ENCODE measurements at regions of chr1 and their contacts with region 1.

Region 1: DNA sequence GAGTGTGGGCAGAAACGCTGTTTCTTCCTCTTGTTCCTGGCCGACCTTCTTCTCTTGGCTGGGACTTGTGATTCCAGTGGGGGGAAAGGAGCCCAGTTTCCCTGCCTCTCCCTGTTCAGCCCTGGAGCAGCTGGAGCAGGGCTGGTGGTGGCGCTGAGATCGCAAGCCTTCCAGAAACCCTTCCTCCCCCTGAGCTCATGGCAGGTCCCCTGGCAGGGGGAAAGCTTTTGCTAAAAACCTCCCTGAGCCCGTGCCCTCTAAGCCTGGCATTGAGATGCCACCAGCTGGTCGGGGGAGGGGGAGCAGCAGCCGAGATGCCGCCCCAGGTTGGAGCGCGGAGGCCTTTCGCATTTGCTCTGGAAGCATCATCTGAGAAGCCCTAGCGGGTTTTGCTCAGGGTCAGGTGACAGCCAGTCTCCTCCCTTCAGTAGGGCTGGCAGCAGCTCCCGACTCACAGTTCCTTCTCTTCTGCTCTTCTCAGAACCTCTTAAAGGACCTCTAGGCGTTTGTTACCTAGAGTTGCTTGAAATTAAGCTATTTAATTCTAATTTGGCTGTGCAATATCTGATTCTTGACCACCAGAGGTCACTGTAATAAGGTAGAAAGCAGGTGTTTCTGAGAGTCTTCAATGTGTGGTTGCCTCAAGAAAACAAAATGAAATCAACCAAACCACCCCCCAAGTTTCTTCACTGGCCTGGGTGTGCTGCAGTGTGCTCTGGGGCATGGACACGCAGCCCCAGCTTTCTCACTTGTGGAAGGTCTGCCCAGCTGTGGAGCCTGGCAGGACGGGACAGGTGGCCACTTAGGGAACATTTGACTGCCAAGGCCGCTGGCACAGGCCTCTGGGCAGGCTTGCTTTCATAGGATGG is 257.3 kb downstream of the CAMTA1 start:
- DNase-seq: peak; percentile 31
- H3K4me3 ChIP-seq: no peak overlapping the region
- H3K27ac ChIP-seq: no peak overlapping the region
- H3K4me1 ChIP-seq: no peaks in the 10 kb centered on the region
- H3K27me3 ChIP-seq: no peaks in the 10 kb centered on the region
- CTCF ChIP-seq: peak; percentile 35 to 40
- POLR2A ChIP-seq: no peak

Region 2: GRCh38 chr1:7026169-7026568 is 16.4 kb before region 1 on chr1:
- CTCF ChIA-PET with region 1: interaction called, 11 read pairs
- POLR2A ChIA-PET with region 1: no interaction called
- dilution Hi-C with region 1: no loop called
- intact Hi-C with region 1: no loop called
- DNase-seq: no peak
- H3K4me3 ChIP-seq: no peak overlapping the region
- H3K27ac ChIP-seq: no peak overlapping the region
- H3K4me1 ChIP-seq: no peaks in the 10 kb centered on the region
- H3K27me3 ChIP-seq: no peaks in the 10 kb centered on the region
- CTCF ChIP-seq: no peak
- POLR2A ChIP-seq: no peak

Region 3: DNA sequence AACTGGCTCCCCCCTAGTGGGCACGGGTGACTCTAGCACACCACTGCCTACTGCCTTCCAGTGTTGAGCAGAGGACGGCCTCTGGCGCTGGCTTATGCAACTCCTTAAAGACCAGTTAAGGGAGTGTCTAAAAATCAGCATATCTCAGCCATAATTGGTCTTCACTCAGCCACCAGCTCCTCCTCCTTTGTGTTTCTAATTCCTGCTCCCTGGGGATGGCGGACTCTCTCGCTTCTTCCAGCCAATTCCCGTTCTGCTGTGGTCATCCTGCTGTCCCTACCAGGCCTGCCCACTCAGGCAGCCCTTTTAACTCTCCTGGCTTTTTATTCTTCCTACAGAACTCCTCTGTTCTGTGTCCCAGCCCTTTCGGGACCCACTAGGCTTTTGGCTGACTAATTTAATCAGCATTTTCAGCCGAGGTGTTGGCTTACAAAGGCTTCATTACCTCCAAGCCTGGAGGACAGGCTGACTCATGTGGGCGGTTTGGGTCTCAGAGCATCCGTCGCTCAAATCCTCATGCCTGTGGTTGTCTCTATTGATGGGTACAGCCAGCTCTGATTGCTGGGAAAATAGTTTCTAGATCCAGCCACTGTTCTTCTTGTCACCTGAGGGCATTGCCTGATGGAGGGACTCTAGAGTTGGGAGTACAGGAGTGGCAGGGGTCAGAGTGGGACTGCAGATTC is 75.2 kb after region 1 on chr1:
- CTCF ChIA-PET with region 1: interaction called, 3 read pairs
- POLR2A ChIA-PET with region 1: no interaction called
- dilution Hi-C with region 1: no loop called
- intact Hi-C with region 1: loop called (anchors 10 kb)
- DNase-seq: no peak
- H3K4me3 ChIP-seq: no peak overlapping the region
- H3K27ac ChIP-seq: no peak overlapping the region
- H3K4me1 ChIP-seq: no peaks in the 10 kb centered on the region
- H3K27me3 ChIP-seq: no peaks in the 10 kb centered on the region
- CTCF ChIP-seq: no peak
- POLR2A ChIP-seq: no peak

Region 4: GRCh38 chr1:7207875-7208646 is 165.5 kb after region 1 on chr1:
- CTCF ChIA-PET with region 1: interaction called, 40 read pairs
- POLR2A ChIA-PET with region 1: no interaction called
- dilution Hi-C with region 1: no loop called
- intact Hi-C with region 1: no loop called
- DNase-seq: peak; percentile 59
- H3K4me3 ChIP-seq: no peak overlapping the region
- H3K27ac ChIP-seq: no peak overlapping the region
- H3K4me1 ChIP-seq: no peaks in the 10 kb centered on the region
- H3K27me3 ChIP-seq: no peaks in the 10 kb centered on the region
- CTCF ChIP-seq: peak; percentile 62 to 72
- POLR2A ChIP-seq: no peak

Region 5: DNA sequence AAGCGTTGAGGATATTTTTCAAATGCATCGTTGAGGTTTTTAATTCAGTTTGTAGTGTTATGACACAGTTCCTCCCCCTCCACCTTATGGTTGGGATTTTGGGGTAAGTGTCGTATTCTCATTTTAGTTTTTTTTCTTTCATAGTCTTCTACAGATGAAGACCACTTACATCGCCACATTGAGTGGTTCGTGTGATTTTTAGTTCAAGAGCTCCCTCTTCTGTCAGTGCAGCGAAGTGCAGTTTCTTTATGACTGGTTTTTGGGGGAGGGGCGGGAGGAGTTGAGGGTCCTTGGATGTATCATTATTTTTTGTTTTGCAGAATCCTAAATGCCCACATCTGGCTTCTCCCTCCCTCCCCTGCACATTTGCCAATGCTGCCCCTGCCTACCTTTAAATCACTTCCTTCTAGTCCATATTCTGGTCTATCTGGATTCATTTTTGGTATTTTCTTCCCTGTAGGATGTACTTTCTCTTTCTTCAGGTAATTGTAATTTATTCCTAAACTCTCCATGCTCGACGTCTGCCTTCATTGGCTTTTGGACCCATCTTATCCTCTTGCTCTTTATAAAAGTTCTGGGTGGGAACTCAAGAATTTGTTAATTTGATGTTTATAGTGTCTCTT is 175.8 kb after region 1 on chr1:
- CTCF ChIA-PET with region 1: interaction called, 18 read pairs
- POLR2A ChIA-PET with region 1: no interaction called
- dilution Hi-C with region 1: no loop called
- intact Hi-C with region 1: loop called (anchors 2 kb)
- DNase-seq: peak; percentile 62
- H3K4me3 ChIP-seq: no peak overlapping the region
- H3K27ac ChIP-seq: no peak overlapping the region
- H3K4me1 ChIP-seq: no peaks in the 10 kb centered on the region
- H3K27me3 ChIP-seq: no peaks in the 10 kb centered on the region
- CTCF ChIP-seq: peak; percentile 66 to 74
- POLR2A ChIP-seq: no peak

Region 6: GRCh38 chr1:7326347-7326746 is 283.8 kb after region 1 on chr1:
- CTCF ChIA-PET with region 1: no interaction called
- POLR2A ChIA-PET with region 1: no interaction called
- dilution Hi-C with region 1: no loop called
- intact Hi-C with region 1: no loop called
- DNase-seq: no peak
- H3K4me3 ChIP-seq: no peak overlapping the region
- H3K27ac ChIP-seq: no peak overlapping the region
- H3K4me1 ChIP-seq: no peaks in the 10 kb centered on the region
- H3K27me3 ChIP-seq: no peaks in the 10 kb centered on the region
- CTCF ChIP-seq: no peak
- POLR2A ChIP-seq: no peak

Region 7: GRCh38 chr1:7576946-7577641 is 534.5 kb after region 1 on chr1:
- CTCF ChIA-PET with region 1: interaction called, 11 read pairs
- POLR2A ChIA-PET with region 1: no interaction called
- dilution Hi-C with region 1: no loop called
- intact Hi-C with region 1: no loop called
- DNase-seq: peak; percentile 43
- H3K4me3 ChIP-seq: no peak overlapping the region
- H3K27ac ChIP-seq: no peak overlapping the region
- H3K4me1 ChIP-seq: no peaks in the 10 kb centered on the region
- H3K27me3 ChIP-seq: no peaks in the 10 kb centered on the region
- CTCF ChIP-seq: peak; percentile 17 to 53
- POLR2A ChIP-seq: no peak

Region 8: DNA sequence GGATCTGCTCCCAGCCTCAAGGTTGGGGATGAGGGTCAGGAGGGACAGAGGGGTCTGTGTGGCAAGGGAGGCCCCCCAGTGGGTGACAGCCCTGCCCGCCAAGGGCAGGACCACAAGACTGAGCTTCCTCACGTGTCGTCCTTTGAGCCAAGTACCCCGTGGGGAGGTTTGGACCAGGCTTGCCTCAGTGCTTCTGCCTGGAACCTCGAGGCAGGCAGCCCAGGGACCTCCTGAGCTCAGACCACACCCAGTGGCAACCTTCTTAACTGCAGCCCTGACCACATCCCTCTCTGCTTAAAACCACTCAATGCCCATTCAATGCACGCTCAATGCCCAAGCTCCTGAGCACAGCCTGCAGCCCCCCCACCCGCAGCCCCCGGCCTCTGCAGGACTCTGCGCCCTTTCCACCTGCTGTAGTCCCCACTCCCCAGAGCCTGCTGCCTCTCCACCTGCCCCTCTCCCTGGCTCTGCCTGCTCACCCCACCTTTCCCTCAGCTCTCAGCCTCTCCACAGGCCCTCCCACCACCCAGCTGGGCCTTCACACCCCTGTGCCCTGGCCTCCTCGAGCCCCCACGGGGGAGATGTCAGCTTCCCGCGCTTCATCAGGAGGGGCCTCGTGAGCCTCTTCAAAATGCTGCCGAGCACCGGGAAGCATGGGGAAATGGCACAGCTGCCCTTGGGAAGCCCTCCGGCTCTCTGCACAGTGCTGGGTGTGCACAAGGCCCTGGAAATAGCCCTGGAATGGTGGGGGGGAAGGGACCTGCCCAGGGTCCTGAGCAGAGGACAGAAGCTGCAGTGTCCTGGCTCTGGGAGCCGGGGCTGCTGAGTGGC is 599.2 kb after region 1 on chr1:
- CTCF ChIA-PET with region 1: interaction called, 112 read pairs
- POLR2A ChIA-PET with region 1: no interaction called
- dilution Hi-C with region 1: no loop called
- intact Hi-C with region 1: loop called (anchors 1 kb)
- DNase-seq: no peak
- H3K4me3 ChIP-seq: no peak overlapping the region
- H3K27ac ChIP-seq: no peak overlapping the region
- H3K4me1 ChIP-seq: peaks cover 6% of the 10 kb centered on the region
- H3K27me3 ChIP-seq: no peaks in the 10 kb centered on the region
- CTCF ChIP-seq: no peak
- POLR2A ChIP-seq: no peak

Measured in endothelial cell of umbilical vein (primary cell).